MCF 10A (cell line): ENCODE measurements at regions of chr5 and their contacts with region 1.

Region 1: DNA sequence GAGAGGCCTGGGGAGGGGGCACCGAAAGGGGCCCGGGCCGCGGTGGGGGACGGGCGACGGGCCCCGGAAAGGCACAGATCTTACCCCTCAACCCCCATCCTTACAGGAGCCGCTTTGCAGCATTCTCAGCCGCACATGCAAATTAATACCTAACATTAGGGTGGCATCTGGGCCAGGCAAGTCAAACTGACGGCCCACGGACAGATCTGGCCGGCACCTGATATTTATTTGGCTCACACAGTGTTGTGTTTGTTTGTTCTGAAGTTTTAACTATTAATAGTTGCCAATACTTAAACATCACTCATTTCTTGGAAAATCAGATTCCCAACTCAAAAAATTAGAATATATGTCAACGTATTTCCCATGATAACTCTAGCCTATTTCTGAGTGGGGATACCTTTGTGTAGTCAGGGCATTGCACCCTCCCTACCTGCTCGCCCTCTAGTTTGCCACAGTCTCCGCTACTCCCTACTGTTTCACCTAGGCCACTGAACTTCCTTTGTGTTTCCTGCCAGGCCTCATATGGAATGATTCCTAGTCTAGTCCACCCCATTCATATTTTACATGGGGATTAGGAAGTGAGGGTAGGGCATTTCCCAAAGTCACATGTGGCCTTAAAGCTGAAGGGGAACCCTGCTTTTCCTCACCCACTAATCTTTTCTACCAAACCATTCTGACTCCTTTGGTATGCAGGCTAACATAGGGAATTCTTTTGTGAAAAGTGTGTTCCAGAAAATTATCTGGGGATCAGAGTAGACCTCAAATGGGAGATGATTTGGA is 71.9 kb upstream of the LARP1 start:
- DNase-seq: no peak
- H3K4me3 Mint-ChIP-seq: peak overlapping the region; percentile 81
- H3K27ac Mint-ChIP-seq: peak overlapping the region; percentile 85
- H3K4me1 Mint-ChIP-seq: peaks cover 18% of the 10 kb centered on the region
- H3K27me3 Mint-ChIP-seq: no peaks in the 10 kb centered on the region
- CTCF ChIP-seq: no peak

Region 2: GRCh38 chr5:153964880-153965645 is 718.2 kb before region 1 on chr5:
- CTCF ChIA-PET with region 1: no interaction called
- POLR2A ChIA-PET with region 1: no interaction called
- intact Hi-C with region 1: no loop called
- DNase-seq: peak; percentile 91
- H3K4me3 Mint-ChIP-seq: peak overlapping the region; percentile 32
- H3K27ac Mint-ChIP-seq: no peak overlapping the region
- H3K4me1 Mint-ChIP-seq: peaks cover 6% of the 10 kb centered on the region
- H3K27me3 Mint-ChIP-seq: no peaks in the 10 kb centered on the region
- CTCF ChIP-seq: peak; percentile 96

Region 3: GRCh38 chr5:154697371-154697770 is 14.1 kb after region 1 on chr5:
- CTCF ChIA-PET with region 1: interaction called, 4 read pairs
- POLR2A ChIA-PET with region 1: interaction called, 44 read pairs
- intact Hi-C with region 1: no loop called
- DNase-seq: no peak
- H3K4me3 Mint-ChIP-seq: no peak overlapping the region
- H3K27ac Mint-ChIP-seq: no peak overlapping the region
- H3K4me1 Mint-ChIP-seq: peaks cover 11% of the 10 kb centered on the region
- H3K27me3 Mint-ChIP-seq: no peaks in the 10 kb centered on the region
- CTCF ChIP-seq: no peak

Region 4: DNA sequence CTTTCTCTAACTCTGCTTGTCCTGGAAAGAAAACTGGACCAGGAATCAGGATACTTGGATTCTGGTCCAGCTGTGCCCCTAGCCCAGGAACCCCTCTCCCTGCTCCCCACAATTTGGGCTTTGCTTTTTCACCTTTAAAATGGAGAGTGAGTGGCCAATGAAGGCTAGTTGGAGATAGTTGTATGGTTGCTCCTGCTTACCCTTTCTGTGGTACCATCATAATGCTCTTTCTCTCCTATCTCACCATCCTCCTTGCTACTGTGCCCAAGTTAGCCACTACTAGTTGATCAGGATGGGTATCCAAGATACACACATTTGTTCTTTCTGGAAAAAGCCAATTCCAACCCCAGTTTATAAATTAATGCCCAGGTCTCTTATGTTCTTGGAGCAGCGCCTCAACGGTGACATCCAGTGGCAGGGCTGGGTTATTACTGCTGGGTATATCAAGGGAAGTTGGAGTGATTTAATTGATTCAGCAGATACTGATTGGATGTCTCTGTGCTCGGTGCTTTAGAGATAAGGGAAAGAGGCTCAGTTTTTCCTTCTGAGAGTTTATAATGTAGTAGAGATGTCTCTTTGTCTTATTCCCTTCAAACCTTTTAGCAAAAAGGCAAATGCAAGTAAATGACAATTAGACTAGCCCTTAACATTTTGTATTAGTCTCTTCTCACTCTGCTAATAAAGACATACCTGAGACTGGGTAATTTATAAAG is 128.5 kb after region 1 on chr5:
- CTCF ChIA-PET with region 1: interaction called, 9 read pairs
- POLR2A ChIA-PET with region 1: interaction called, 3 read pairs
- intact Hi-C with region 1: loop called (anchors 1 kb)
- DNase-seq: peak; percentile 77
- H3K4me3 Mint-ChIP-seq: no peak overlapping the region
- H3K27ac Mint-ChIP-seq: peak overlapping the region; percentile 4
- H3K4me1 Mint-ChIP-seq: peaks cover 15% of the 10 kb centered on the region
- H3K27me3 Mint-ChIP-seq: no peaks in the 10 kb centered on the region
- CTCF ChIP-seq: peak; percentile 94